ENCODE measurements at regions of chr3 and their contacts with region 1.

Region 1: GRCh38 chr3:184801241-184801785 is 10.7 kb upstream of the VPS8 start:
- DNase-seq: no peak
- H3K4me3 Mint-ChIP-seq: no peak overlapping the region
- H3K27ac Mint-ChIP-seq: no peak overlapping the region
- H3K4me1 Mint-ChIP-seq: no peaks in the 10 kb centered on the region
- H3K27me3 Mint-ChIP-seq: peaks cover 20% of the 10 kb centered on the region

Region 2: DNA sequence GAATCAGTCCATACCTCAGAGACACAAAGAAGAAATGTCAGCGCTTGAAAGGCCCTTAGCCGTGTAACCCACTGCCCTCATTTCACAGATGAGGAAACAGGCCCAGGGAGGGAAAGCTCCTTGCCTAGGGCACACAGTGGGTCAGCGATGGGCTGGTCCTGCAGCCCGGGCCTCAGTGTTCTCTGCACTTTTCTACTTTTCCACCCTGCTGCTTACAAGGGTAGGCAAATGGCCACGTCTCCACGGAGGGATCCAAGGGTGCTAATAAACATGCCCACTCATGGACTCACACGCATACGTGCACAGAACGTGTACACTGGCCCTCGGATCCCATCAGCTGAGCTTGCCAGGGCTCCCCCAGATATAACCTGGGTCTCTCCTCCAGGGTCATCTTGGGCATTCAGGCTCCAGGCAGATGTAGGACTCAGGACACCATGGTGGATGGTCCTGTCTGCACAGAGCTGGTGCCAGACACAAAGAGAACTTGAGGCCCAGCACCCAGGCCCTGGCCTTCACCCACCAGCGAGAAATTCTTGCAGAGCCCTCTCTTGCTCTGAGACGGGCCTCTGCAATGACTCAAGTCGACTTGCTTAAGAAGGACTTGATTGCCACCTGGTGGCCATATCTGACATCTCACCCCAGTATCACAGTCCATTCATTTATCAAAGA is 23.8 kb before region 1 on chr3:
- CTCF ChIA-PET with region 1: interaction called, 7 read pairs
- POLR2A ChIA-PET with region 1: no interaction called
- intact Hi-C with region 1: loop called (anchors 2 kb)
- DNase-seq: peak; percentile 88
- H3K4me3 Mint-ChIP-seq: no peak overlapping the region
- H3K27ac Mint-ChIP-seq: no peak overlapping the region
- H3K4me1 Mint-ChIP-seq: no peaks in the 10 kb centered on the region
- H3K27me3 Mint-ChIP-seq: peaks cover 8% of the 10 kb centered on the region

Region 3: DNA sequence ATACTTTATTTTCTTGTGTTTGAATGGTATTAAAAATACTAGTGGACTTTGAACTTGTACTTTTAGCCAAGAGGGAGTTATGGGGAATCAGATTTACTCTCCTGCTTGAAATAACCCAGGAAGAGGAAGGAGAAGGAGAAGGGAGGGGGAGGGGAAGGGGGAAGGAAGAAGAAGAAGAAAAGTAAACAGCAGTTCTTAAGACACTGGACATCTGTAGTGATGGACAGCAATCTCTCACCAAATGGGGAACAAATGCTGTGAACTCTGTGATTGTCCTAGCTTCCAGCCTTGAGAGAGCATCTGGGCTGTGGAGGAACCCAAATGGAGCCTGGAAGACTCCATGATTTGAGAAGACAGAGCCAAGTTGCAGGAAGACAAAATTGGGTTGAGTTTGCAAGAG is 62.7 kb after region 1 on chr3:
- CTCF ChIA-PET with region 1: no interaction called
- POLR2A ChIA-PET with region 1: no interaction called
- intact Hi-C with region 1: no loop called
- DNase-seq: no peak
- H3K4me3 Mint-ChIP-seq: no peak overlapping the region
- H3K27ac Mint-ChIP-seq: no peak overlapping the region
- H3K4me1 Mint-ChIP-seq: no peaks in the 10 kb centered on the region
- H3K27me3 Mint-ChIP-seq: no peaks in the 10 kb centered on the region

Region 4: DNA sequence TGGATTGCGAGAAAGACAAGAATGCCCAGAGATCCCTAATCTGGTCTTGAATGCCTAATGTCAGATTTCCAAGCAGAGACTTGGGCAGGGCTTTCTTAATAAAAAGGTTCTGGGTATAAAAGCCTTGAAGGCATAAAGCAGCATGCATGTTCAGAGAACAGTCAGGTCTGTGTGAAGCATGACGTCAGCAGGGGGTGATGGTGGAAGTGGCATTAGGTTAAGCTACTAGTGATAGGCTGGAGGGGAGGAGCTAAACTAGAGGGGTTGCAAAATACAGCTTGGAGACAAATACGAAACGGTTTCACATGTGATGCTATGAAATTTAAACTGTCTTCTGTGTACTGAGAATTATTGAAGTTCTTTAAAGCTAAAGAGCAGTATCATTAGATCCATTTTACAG is 136.3 kb after region 1 on chr3:
- CTCF ChIA-PET with region 1: no interaction called
- POLR2A ChIA-PET with region 1: no interaction called
- intact Hi-C with region 1: no loop called
- DNase-seq: no peak
- H3K4me3 Mint-ChIP-seq: no peak overlapping the region
- H3K27ac Mint-ChIP-seq: no peak overlapping the region
- H3K4me1 Mint-ChIP-seq: no peaks in the 10 kb centered on the region
- H3K27me3 Mint-ChIP-seq: no peaks in the 10 kb centered on the region

Measured in activated CD4-positive, alpha-beta memory T cell treated with anti-CD3 and anti-CD28 coated beads for 36 hours (primary cell).